Caco-2 (cell line): ENCODE measurements at regions of chr15 and their contacts with region 1.

Region 1: DNA sequence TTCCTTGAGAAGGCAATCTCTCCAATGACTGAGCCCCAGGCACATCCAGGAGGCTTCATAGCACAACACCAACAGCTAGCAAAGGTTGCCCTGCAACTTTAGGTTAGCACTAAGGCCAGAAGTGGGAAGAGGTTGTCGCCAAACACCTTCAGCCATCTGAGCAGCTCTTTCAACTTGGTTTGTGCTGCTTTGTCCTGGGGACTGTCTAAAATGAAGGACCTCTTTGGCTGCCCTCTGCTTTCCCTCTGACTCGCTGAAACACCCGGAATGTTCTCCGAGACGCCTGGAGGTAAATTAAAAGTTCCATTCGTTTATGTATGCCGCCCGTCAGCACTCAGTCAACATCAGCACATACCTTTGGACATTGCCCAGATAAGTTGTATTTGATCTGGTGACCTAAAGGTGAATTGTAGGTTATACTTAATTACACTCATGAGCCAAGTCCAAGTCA is 121.2 kb upstream of the NR2F2 start:
- DNase-seq: peak; percentile 85 to 92
- H3K4me3 ChIP-seq: no peak overlapping the region
- H3K4me3 Mint-ChIP-seq: peak overlapping the region; percentile 52
- H3K27ac Mint-ChIP-seq: peak overlapping the region; percentile 93
- H3K4me1 ChIP-seq: peaks cover 35% of the 10 kb centered on the region
- H3K4me1 Mint-ChIP-seq: peaks cover 24% of the 10 kb centered on the region
- H3K27me3 ChIP-seq: no peaks in the 10 kb centered on the region
- H3K27me3 Mint-ChIP-seq: no peaks in the 10 kb centered on the region
- CTCF ChIP-seq: no peak

Region 2: DNA sequence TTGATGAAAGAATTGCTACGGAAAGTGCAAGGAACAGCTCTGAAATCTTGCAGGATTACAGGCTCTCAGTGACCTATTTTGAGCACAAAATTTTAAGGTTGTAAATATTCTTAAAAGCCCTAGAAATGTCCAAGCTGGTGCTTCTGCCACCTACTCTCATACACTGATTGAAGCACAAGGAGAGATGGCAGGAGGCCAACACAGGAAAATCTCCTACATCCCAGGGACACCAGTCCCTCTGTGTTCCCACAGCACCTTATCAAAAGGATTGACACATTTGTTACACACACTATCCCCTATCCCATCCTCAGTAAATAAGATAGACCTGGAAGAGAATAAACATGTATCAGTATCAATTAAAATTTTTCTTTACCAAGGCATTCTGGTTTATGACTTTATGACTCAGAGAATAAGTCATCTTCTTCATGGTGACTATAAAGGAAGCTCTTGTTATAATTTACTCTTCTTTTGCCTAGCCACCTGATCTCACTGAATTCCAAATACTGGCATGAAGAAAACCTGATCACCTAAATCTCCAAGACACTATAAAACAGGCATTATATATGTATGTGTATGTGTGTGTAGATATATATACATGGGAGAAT is 87.1 kb before region 1 on chr15:
- CTCF ChIA-PET with region 1: no interaction called
- POLR2A ChIA-PET with region 1: no interaction called
- intact Hi-C with region 1: loop called (anchors 5 kb)
- DNase-seq: no peak
- H3K4me3 ChIP-seq: no peak overlapping the region
- H3K4me3 Mint-ChIP-seq: peak overlapping the region; percentile 23
- H3K27ac Mint-ChIP-seq: peak overlapping the region; percentile 66
- H3K4me1 ChIP-seq: peaks cover 49% of the 10 kb centered on the region
- H3K4me1 Mint-ChIP-seq: peaks cover 54% of the 10 kb centered on the region
- H3K27me3 ChIP-seq: no peaks in the 10 kb centered on the region
- H3K27me3 Mint-ChIP-seq: no peaks in the 10 kb centered on the region
- CTCF ChIP-seq: no peak

Region 3: DNA sequence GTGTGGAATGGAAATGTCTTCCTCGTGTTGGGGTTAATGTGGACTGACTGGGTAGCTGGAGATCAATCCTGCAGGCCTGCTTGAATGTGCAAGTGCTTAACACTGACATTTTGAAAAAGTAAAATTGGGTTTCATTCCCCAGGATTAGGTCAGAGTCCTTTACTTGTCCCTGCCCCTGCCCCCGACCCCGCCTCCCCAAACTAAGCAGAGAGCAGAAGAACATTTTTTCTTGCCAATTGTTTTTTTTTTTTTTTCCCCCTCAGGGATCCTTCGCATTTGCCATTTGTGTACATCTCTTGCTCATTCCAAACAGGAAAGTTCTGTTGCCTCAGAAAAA is 25.8 kb before region 1 on chr15:
- CTCF ChIA-PET with region 1: no interaction called
- POLR2A ChIA-PET with region 1: no interaction called
- intact Hi-C with region 1: loop called (anchors 1 kb)
- DNase-seq: peak; percentile 34 to 45
- H3K4me3 ChIP-seq: no peak overlapping the region
- H3K4me3 Mint-ChIP-seq: peak overlapping the region; percentile 52
- H3K27ac Mint-ChIP-seq: peak overlapping the region; percentile 60
- H3K4me1 ChIP-seq: peaks cover 52% of the 10 kb centered on the region
- H3K4me1 Mint-ChIP-seq: peaks cover 57% of the 10 kb centered on the region
- H3K27me3 ChIP-seq: no peaks in the 10 kb centered on the region
- H3K27me3 Mint-ChIP-seq: no peaks in the 10 kb centered on the region
- CTCF ChIP-seq: no peak

Region 4: GRCh38 chr15:96254168-96254567 is 44.9 kb after region 1 on chr15:
- CTCF ChIA-PET with region 1: no interaction called
- POLR2A ChIA-PET with region 1: no interaction called
- intact Hi-C with region 1: loop called (anchors 2 kb)
- DNase-seq: peak; percentile 59 to 65
- H3K4me3 ChIP-seq: no peak overlapping the region
- H3K4me3 Mint-ChIP-seq: peak overlapping the region; percentile 43
- H3K27ac Mint-ChIP-seq: peak overlapping the region; percentile 77
- H3K4me1 ChIP-seq: peaks cover 49% of the 10 kb centered on the region
- H3K4me1 Mint-ChIP-seq: peaks cover 44% of the 10 kb centered on the region
- H3K27me3 ChIP-seq: no peaks in the 10 kb centered on the region
- H3K27me3 Mint-ChIP-seq: no peaks in the 10 kb centered on the region
- CTCF ChIP-seq: no peak

Region 5: DNA sequence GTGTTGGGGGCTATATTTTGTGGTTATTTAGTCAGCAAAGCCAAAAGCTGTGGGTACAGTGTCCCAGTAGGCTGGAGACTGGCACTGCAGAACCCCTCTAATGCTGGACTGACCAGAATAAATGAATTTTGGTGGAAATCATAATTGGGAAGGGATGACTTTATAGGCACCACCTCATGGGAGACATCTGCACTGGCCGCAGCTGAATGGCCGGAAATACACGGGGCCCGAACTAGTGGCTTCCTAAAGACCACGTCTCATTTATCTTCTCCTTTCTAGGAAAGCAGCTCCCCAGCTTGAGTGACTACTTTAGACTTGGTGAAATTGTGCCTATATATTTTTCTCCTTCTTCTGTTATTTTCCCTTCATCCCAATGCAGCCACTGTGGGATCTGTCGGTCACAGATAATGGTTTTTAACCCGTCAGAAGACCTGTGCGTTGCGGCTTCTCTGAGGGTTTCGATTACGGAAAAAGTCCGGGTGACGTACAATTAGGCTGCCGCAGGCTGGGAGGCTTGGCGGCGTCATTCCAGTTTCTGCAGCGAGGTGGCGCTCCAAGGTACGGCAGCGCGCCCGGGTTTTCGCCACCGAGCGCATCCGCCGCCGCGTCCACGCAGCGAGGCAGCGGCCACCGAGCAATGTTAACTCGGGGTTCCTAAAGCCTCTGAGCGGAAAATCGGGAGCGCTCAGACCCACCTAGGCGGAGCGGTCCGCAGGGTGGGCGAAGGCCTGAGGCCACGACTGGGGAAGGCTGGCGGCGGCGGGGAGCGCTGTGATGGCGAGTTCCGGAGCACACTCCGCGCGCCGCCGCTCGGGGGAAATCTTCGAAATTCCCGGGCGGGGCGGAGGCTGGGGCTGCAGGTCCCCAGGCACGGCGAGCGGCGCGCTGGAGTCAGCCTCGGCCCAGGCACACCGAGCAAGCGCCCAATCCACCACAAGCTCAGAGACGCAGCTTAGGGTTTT is 147.5 kb after region 1 on chr15:
- CTCF ChIA-PET with region 1: no interaction called
- POLR2A ChIA-PET with region 1: no interaction called
- intact Hi-C with region 1: no loop called
- DNase-seq: peak; percentile 82 to 92
- H3K4me3 ChIP-seq: peak overlapping the region; percentile 80
- H3K4me3 Mint-ChIP-seq: peak overlapping the region; percentile 82
- H3K27ac Mint-ChIP-seq: peak overlapping the region; percentile 83
- H3K4me1 ChIP-seq: no peaks in the 10 kb centered on the region
- H3K4me1 Mint-ChIP-seq: peaks cover 8% of the 10 kb centered on the region
- H3K27me3 ChIP-seq: no peaks in the 10 kb centered on the region
- H3K27me3 Mint-ChIP-seq: no peaks in the 10 kb centered on the region
- CTCF ChIP-seq: peak; percentile 90 to 96